B cell (primary cell): ENCODE measurements at regions of chr4 and their contacts with region 1.

Region 1: DNA sequence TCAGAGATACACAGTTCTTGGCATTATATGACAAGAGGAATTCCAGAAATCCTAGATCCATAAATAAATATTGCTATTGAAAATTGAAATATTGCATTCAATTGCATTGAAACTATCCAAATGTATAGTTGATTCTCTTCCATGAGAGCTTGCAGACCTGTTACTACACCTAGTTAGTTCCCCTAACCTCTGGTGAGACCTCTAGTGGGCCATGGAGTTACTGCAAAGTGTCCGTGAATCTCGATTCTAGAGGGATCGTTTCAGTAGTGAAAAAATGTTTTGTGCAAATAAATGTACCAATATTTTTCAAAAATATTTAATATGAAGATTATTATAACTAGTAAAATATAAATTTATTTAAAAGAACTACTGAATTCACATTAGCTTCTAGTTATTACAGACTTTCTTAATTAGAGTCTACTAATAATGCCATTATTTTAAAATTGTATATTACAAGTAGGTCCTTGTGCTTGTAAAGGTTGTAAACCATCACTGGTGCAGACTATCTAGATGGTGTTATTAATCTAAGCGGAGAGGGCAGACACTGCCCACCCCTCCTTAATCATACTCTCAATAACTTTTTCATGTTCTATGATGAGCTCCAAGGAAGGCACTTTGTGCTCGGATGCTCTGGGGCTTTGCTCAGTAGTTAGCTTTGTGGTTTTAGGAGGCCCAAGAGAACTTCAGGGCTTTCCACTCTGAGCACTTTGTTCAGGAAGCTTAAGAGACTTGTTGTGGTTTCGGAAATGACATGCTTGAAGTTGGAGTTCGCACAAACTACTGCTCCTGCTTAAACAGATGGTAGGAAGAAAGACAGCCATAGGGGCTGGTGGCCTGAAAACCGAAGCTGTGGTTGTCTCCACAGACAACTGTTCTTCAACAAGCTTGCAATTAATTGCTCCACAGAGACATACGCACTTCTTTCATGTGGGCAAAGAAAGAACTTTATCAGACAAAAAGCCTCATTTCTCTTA is 42.8 kb downstream of the IL21 start:
- DNase-seq: peak; percentile 32
- ATAC-seq: no peak
- H3K4me3 ChIP-seq: no peak overlapping the region
- H3K4me3 Mint-ChIP-seq: no peak overlapping the region
- H3K27ac ChIP-seq: no peak overlapping the region
- H3K27ac Mint-ChIP-seq: no peak overlapping the region
- H3K4me1 ChIP-seq: peaks cover 7% of the 10 kb centered on the region in 2 donors
- H3K4me1 Mint-ChIP-seq: peaks cover 6% of the 10 kb centered on the region
- H3K27me3 ChIP-seq: peaks cover 0 to 12% (median 7%) of the 10 kb centered on the region in 4 experiments
- H3K27me3 Mint-ChIP-seq: peaks cover 29% of the 10 kb centered on the region
- CTCF ChIP-seq: peak; percentile 81

Region 2: DNA sequence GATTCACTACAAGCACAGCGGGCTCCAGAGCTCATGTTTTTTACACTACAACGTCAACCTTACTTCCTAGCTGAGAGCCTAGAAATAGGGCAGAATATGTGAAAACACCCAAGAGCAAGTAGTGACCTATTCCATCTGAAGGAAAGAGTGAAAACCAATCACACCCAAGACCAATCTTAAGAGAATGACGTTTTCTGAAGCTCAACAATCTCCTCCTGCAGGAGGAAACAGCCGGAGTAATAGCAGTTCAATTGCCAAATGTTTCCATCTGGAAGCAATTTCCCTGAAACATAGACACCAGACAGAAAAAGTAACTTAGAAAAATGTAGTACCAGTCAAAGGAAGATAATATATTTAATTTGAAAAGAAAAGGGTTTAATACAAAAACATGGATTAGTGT is 1023.7 kb before region 1 on chr4:
- CTCF ChIA-PET with region 1: no interaction called
- POLR2A ChIA-PET with region 1: no interaction called
- intact Hi-C with region 1: no loop called
- DNase-seq: no peak
- ATAC-seq: no peak
- H3K4me3 ChIP-seq: no peak overlapping the region
- H3K4me3 Mint-ChIP-seq: no peak overlapping the region
- H3K27ac ChIP-seq: no peak overlapping the region
- H3K27ac Mint-ChIP-seq: no peak overlapping the region
- H3K4me1 ChIP-seq: no peaks in the 10 kb centered on the region
- H3K4me1 Mint-ChIP-seq: no peaks in the 10 kb centered on the region
- H3K27me3 ChIP-seq: no peaks in the 10 kb centered on the region
- H3K27me3 Mint-ChIP-seq: no peaks in the 10 kb centered on the region
- CTCF ChIP-seq: no peak

Region 3: GRCh38 chr4:122588453-122589238 is 10.6 kb after region 1 on chr4:
- CTCF ChIA-PET with region 1: interaction called, 15 read pairs
- POLR2A ChIA-PET with region 1: no interaction called
- intact Hi-C with region 1: no loop called
- DNase-seq: no peak
- ATAC-seq: no peak
- H3K4me3 ChIP-seq: no peak overlapping the region
- H3K4me3 Mint-ChIP-seq: no peak overlapping the region
- H3K27ac ChIP-seq: no peak overlapping the region
- H3K27ac Mint-ChIP-seq: no peak overlapping the region
- H3K4me1 ChIP-seq: no peaks in the 10 kb centered on the region
- H3K4me1 Mint-ChIP-seq: peaks cover 2% of the 10 kb centered on the region
- H3K27me3 ChIP-seq: no peaks in the 10 kb centered on the region
- H3K27me3 Mint-ChIP-seq: peaks cover 7% of the 10 kb centered on the region
- CTCF ChIP-seq: no peak

Region 4: GRCh38 chr4:122661176-122662160 is 83.4 kb after region 1 on chr4:
- CTCF ChIA-PET with region 1: no interaction called
- POLR2A ChIA-PET with region 1: no interaction called
- intact Hi-C with region 1: no loop called
- DNase-seq: no peak
- ATAC-seq: no peak
- H3K4me3 ChIP-seq: no peak overlapping the region
- H3K4me3 Mint-ChIP-seq: no peak overlapping the region
- H3K27ac ChIP-seq: no peak overlapping the region
- H3K27ac Mint-ChIP-seq: no peak overlapping the region
- H3K4me1 ChIP-seq: no peaks in the 10 kb centered on the region
- H3K4me1 Mint-ChIP-seq: no peaks in the 10 kb centered on the region
- H3K27me3 ChIP-seq: peaks cover 0 to 2% (median under 1%) of the 10 kb centered on the region in 4 experiments
- H3K27me3 Mint-ChIP-seq: peaks cover 13% of the 10 kb centered on the region
- CTCF ChIP-seq: no peak